ENCODE measurements at regions of chr1 and their contacts with region 1.

Region 1: GRCh38 chr1:204640578-204640977 is 45.0 kb downstream of the LRRN2 start:
- DNase-seq: no peak
- CTCF ChIP-seq: no peak

Region 2: GRCh38 chr1:204651843-204652421 is 11.4 kb after region 1 on chr1:
- CTCF ChIA-PET with region 1: interaction called, 27 read pairs
- POLR2A ChIA-PET with region 1: no interaction called
- DNase-seq: no peak
- CTCF ChIP-seq: no peak

Region 3: GRCh38 chr1:204670152-204670927 is 29.8 kb after region 1 on chr1:
- CTCF ChIA-PET with region 1: no interaction called
- POLR2A ChIA-PET with region 1: no interaction called
- DNase-seq: no peak
- CTCF ChIP-seq: no peak

Region 4: GRCh38 chr1:204684571-204685235 is 44.1 kb after region 1 on chr1:
- CTCF ChIA-PET with region 1: no interaction called
- POLR2A ChIA-PET with region 1: no interaction called
- DNase-seq: no peak
- CTCF ChIP-seq: no peak